PC-3 (cell line): ENCODE measurements at regions of chr1 and their contacts with region 1.

Region 1: GRCh38 chr1:75632350-75632949 is 21.5 kb upstream of the SLC44A5 start:
- DNase-seq: peak; percentile 60
- ATAC-seq: peak; percentile 72
- H3K4me3 ChIP-seq: no peak overlapping the region
- H3K27ac ChIP-seq: no peak overlapping the region
- H3K4me1 ChIP-seq: no peaks in the 10 kb centered on the region
- H3K27me3 ChIP-seq: peaks cover 13% of the 10 kb centered on the region; the same call in 1 of the 2 replicates
- CTCF ChIP-seq: peak; percentile 81

Region 2: GRCh38 chr1:75233302-75233929 is 399.0 kb before region 1 on chr1:
- CTCF ChIA-PET with region 1: no interaction called
- POLR2A ChIA-PET with region 1: no interaction called
- intact Hi-C with region 1: loop called (anchors 1 kb)
- DNase-seq: peak; percentile 64
- ATAC-seq: peak; percentile 71
- H3K4me3 ChIP-seq: no peak overlapping the region
- H3K27ac ChIP-seq: no peak overlapping the region
- H3K4me1 ChIP-seq: no peaks in the 10 kb centered on the region
- H3K27me3 ChIP-seq: peaks cover 19% of the 10 kb centered on the region
- CTCF ChIP-seq: peak; percentile 83

Region 3: DNA sequence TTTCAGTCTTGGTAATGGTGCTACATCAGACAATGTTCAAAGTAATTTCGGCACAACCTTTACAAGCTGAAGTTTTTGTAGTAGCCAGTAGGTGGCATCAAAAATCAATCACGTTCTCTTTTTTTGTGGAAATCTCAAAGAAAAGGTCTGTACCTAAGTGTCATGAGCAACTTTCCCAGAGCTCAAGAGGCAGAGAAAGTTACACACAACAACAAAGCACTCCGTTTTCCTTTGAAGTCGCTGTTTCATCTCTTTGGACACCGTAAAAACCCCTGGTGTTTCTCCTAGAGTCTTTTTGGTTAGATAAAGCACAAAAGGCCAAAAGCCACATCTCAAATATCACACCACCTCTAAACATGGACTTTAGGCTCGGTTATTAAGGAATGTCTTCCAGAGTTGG is 366.7 kb before region 1 on chr1:
- CTCF ChIA-PET with region 1: no interaction called
- POLR2A ChIA-PET with region 1: no interaction called
- intact Hi-C with region 1: loop called (anchors 1 kb)
- DNase-seq: peak; percentile 57
- ATAC-seq: peak; percentile 53
- H3K4me3 ChIP-seq: no peak overlapping the region
- H3K27ac ChIP-seq: no peak overlapping the region
- H3K4me1 ChIP-seq: no peaks in the 10 kb centered on the region
- H3K27me3 ChIP-seq: no peaks in the 10 kb centered on the region
- CTCF ChIP-seq: peak; percentile 75